Mucosa of descending colon (tissue), 3 donors: ENCODE measurements at regions of chr9 and their contacts with region 1.

Region 1: DNA sequence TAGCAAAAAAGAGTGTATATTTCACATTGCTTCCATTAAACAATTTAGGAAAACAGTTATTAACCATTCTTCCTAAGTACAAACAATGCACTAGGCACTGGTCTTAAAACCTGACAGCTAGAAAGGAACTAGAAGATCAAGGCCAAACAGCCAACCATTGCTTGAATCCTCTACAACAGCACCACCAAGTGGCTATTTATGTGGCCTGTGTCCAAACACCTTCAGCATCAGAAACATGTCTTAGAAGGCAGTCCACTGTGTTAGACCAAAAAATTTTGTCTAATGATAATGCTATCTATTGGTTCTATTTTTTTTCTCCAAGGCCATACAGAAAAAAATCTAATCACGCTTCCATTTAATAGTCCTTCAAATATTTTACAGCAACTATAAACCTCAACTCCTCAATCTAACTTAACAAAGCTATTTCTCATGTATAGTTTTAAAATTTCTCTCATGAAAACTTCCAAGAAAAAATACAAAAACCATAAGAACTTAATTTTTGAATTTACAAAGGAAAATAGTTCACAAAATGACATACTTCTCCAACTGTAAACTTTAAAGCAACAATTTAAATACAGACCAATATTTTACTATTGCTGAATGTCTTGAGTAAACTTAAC is 36.1 kb downstream of the CAAP1 start:
- DNase-seq: peak in 1 of 3 donors; percentile 63
- ATAC-seq: peak; percentile 74
- H3K4me3 ChIP-seq: no peak overlapping the region
- H3K4me1 ChIP-seq: no peaks in the 10 kb centered on the region
- CTCF ChIP-seq: peak; percentile 25

Region 2: GRCh38 chr9:26669666-26670352 is 186.7 kb before region 1 on chr9:
- intact Hi-C with region 1: no loop called
- DNase-seq: no peak
- ATAC-seq: no peak
- H3K4me3 ChIP-seq: no peak overlapping the region
- H3K4me1 ChIP-seq: no peaks in the 10 kb centered on the region
- CTCF ChIP-seq: no peak

Region 3: GRCh38 chr9:26744191-26744965 is 112.1 kb before region 1 on chr9:
- intact Hi-C with region 1: loop called in 1 of 2 experiments (anchors 10 kb)
- DNase-seq: no peak
- ATAC-seq: peak; percentile 19
- H3K4me3 ChIP-seq: no peak overlapping the region
- H3K4me1 ChIP-seq: no peaks in the 10 kb centered on the region
- CTCF ChIP-seq: peak; percentile 61